ENCODE measurements at regions of chr1 and their contacts with region 1.

Region 1: GRCh38 chr1:212035123-212035834 is at the starts of genes DTL and INTS7:
- DNase-seq: peak; percentile 99
- H3K4me3 ChIP-seq: peak within 1 kb of the TSS; percentile 70 to 94 (median 78)
- H3K27ac ChIP-seq: peak within 1 kb of the TSS; percentile 71
- H3K4me1 ChIP-seq: peaks cover 36% of the 10 kb centered on the region
- H3K27me3 ChIP-seq: no peaks in the 10 kb centered on the region
- CTCF ChIP-seq: peak; percentile 90 to 95
- POLR2A ChIP-seq: peak; percentile 76
- total RNA-seq, gene DTL: 26.5 and 27.2 TPM in 2 replicates
- total RNA-seq, gene INTS7: 16.1 and 18.1 TPM in 2 replicates

Region 2: GRCh38 chr1:211578640-211579433 is 456.4 kb before region 1 on chr1 and contains the start of gene SLC30A1:
- CTCF ChIA-PET with region 1: no interaction called
- POLR2A ChIA-PET with region 1: no interaction called
- dilution Hi-C with region 1: no loop called
- intact Hi-C with region 1: loop called (anchors 1 kb)
- DNase-seq: peak; percentile 98
- H3K4me3 ChIP-seq: peak within 1 kb of the TSS; percentile 74 to 99 (median 98)
- H3K27ac ChIP-seq: peak within 1 kb of the TSS; percentile 64
- H3K4me1 ChIP-seq: peaks cover 33% of the 10 kb centered on the region
- H3K27me3 ChIP-seq: no peaks in the 10 kb centered on the region
- CTCF ChIP-seq: no peak
- POLR2A ChIP-seq: peak; percentile 94
- total RNA-seq, gene SLC30A1: 21.5 and 22.1 TPM in 2 replicates

Region 3: GRCh38 chr1:211698161-211699026 is 336.9 kb before region 1 on chr1:
- CTCF ChIA-PET with region 1: interaction called, 55 read pairs
- POLR2A ChIA-PET with region 1: no interaction called
- dilution Hi-C with region 1: no loop called
- intact Hi-C with region 1: loop called (anchors 1 kb)
- DNase-seq: peak; percentile 60
- H3K4me3 ChIP-seq: no peak overlapping the region
- H3K27ac ChIP-seq: no peak overlapping the region
- H3K4me1 ChIP-seq: no peaks in the 10 kb centered on the region
- H3K27me3 ChIP-seq: peaks cover 10 to 11% of the 10 kb centered on the region in 2 experiments
- CTCF ChIP-seq: peak; percentile 96 to 98
- POLR2A ChIP-seq: no peak

Region 4: GRCh38 chr1:212012034-212012740 is 23.1 kb before region 1 on chr1:
- CTCF ChIA-PET with region 1: interaction called, 25 read pairs
- POLR2A ChIA-PET with region 1: no interaction called
- dilution Hi-C with region 1: no loop called
- intact Hi-C with region 1: loop called (anchors 1 kb)
- DNase-seq: peak; percentile 70
- H3K4me3 ChIP-seq: no peak overlapping the region
- H3K27ac ChIP-seq: no peak overlapping the region
- H3K4me1 ChIP-seq: peaks cover 4% of the 10 kb centered on the region
- H3K27me3 ChIP-seq: no peaks in the 10 kb centered on the region
- CTCF ChIP-seq: peak; percentile 90 to 92
- POLR2A ChIP-seq: no peak

Region 5: GRCh38 chr1:212138441-212138840 is 103.2 kb after region 1 on chr1:
- CTCF ChIA-PET with region 1: no interaction called
- POLR2A ChIA-PET with region 1: no interaction called
- dilution Hi-C with region 1: no loop called
- intact Hi-C with region 1: no loop called
- DNase-seq: no peak
- H3K4me3 ChIP-seq: no peak overlapping the region
- H3K27ac ChIP-seq: no peak overlapping the region
- H3K4me1 ChIP-seq: no peaks in the 10 kb centered on the region
- H3K27me3 ChIP-seq: no peaks in the 10 kb centered on the region
- CTCF ChIP-seq: no peak
- POLR2A ChIP-seq: no peak

Region 6: DNA sequence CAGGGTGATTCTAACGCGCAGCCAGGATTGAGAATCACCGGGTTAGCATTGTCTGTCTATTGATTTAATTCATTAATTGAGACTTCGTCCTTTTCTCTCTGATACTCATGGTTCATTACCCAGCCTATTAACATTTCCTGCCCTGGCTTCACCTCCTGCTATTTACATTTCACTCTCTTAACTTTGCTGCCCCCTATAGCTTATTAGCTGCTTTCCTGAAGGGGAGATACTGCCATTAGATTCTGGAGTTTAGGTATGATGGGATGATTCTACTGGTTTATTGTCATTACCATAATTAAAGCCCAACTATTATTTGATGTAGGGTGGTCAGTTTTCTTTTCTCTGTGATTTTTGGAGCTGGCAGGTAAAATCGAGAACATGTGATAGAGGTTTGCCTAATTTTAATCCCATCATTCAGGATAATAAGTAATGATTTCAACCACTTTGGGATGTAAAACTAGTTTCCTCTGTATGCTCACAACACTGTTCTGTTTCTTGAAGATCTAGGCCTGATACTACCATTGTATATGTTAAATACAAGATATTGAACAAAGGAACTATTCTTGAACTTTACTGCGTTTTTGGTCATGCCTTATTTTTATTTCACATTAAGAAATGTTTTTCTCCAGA is 256.3 kb after region 1 on chr1:
- CTCF ChIA-PET with region 1: interaction called, 10 read pairs
- POLR2A ChIA-PET with region 1: no interaction called
- dilution Hi-C with region 1: no loop called
- intact Hi-C with region 1: loop called (anchors 1 kb)
- DNase-seq: peak; percentile 62
- H3K4me3 ChIP-seq: no peak overlapping the region
- H3K27ac ChIP-seq: no peak overlapping the region
- H3K4me1 ChIP-seq: peaks cover 27% of the 10 kb centered on the region
- H3K27me3 ChIP-seq: no peaks in the 10 kb centered on the region
- CTCF ChIP-seq: peak; percentile 53 to 54
- POLR2A ChIP-seq: no peak

Region 7: DNA sequence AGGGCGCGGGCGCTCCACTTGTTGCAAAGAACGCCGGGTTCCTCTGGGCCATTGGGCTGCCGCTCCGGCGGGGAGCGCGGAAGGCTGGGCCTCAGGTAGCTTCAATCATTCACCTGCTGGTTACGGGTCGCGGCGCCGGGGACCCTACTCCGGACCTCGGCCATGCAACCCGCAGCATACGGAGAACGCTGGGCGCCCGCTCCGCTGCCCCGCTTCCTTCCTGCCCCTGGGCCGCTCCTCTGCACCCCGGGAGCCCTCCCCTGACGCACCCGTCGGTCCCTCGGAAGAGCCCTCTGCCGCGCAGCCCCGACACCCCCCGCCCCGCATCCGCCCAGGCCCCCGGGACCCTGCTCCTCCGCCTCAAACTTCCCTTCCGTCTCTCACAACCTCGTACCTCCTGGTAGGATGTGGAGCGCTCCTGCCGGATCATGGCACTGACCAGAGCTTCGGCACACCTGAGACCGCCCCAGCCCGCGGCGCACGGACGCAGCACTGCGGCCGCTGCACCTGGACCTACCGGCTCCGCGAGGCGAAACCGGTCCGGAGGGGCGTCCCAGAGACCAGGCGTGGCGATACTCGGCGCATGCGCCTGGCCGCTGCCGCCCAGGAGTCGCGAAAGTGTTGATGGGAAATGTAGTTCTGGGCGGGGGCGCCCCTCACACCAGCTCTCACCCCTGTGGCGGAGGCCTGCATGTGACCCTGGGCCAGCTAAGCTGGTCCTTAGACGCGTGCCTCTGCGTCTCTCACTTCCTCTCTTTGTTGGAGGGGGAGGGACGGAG is 379.2 kb after region 1 on chr1 and contains the start of gene PACC1:
- CTCF ChIA-PET with region 1: no interaction called
- POLR2A ChIA-PET with region 1: no interaction called
- dilution Hi-C with region 1: no loop called
- intact Hi-C with region 1: no loop called
- DNase-seq: peak; percentile 92
- H3K4me3 ChIP-seq: peak within 1 kb of the TSS; percentile 44 to 80 (median 73)
- H3K27ac ChIP-seq: no peak within 1 kb of the TSS
- H3K4me1 ChIP-seq: peaks cover 6% of the 10 kb centered on the region
- H3K27me3 ChIP-seq: no peaks in the 10 kb centered on the region
- CTCF ChIP-seq: peak in 1 of 2 donors; percentile 25
- POLR2A ChIP-seq: peak; percentile 65
- total RNA-seq, gene PACC1: 18.4 and 21.0 TPM in 2 replicates

Region 8: DNA sequence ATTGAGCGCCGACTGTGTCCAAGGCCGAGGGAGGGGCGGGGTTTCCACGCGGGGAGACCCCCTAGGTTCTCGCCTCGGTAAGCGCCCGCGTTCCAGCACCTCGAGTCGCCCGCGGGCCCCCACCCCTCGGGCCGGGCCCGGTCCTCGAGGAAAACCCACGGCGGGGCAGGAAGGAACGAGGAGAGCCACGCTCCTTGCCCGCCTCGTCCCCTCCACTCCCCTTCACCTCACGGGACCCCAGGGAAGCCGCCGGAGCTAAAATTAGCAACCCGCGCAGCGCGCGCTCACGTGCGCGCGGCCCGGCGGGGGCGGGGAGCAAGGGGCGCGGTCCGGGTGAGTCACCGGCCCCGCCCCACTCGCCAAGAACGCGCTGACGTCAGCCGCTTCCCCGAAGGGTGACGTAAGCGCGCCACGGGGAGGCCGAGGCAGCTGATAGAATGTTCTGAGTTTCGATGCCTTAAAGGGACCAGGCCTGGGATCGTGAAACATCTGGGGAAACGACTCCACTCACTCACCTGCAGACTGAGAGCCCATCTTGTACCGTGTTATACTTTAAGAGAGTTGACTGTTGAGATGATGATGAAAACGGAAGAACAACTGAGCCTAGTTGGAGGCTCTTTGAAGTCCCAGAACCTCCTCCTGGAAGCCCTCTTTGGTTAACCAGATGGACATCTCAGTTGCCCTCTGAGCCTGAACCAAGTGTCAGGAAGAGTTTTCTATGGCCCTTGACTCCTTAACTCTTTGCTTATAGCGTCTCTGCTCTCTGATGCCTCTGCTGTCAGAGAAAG is 523.6 kb after region 1 on chr1:
- CTCF ChIA-PET with region 1: no interaction called
- POLR2A ChIA-PET with region 1: no interaction called
- dilution Hi-C with region 1: no loop called
- intact Hi-C with region 1: loop called (anchors 2 kb)
- DNase-seq: peak; percentile 84
- H3K4me3 ChIP-seq: peak overlapping the region; percentile 58 to 74 (median 68)
- H3K27ac ChIP-seq: peak overlapping the region; percentile 69
- H3K4me1 ChIP-seq: peaks cover 18% of the 10 kb centered on the region
- H3K27me3 ChIP-seq: peaks cover 4 to 5% of the 10 kb centered on the region in 2 experiments
- CTCF ChIP-seq: no peak
- POLR2A ChIP-seq: peak; percentile 43

Measured in endothelial cell of umbilical vein (primary cell).